ENCODE measurements at regions of chr12 and their contacts with region 1.

Region 1: GRCh38 chr12:8609061-8609570 is 3.5 kb downstream of the AICDA start:
- DNase-seq: peak; percentile 67
- H3K4me3 ChIP-seq: no peak overlapping the region
- H3K27ac ChIP-seq: no peak overlapping the region
- H3K4me1 ChIP-seq: no peaks in the 10 kb centered on the region
- H3K27me3 ChIP-seq: peaks cover 4 to 9% of the 10 kb centered on the region in 2 experiments
- CTCF ChIP-seq: peak; percentile 58 to 75
- POLR2A ChIP-seq: no peak

Region 2: GRCh38 chr12:8596561-8596960 is 12.6 kb before region 1 on chr12:
- CTCF ChIA-PET with region 1: interaction called, 12 read pairs
- POLR2A ChIA-PET with region 1: no interaction called
- dilution Hi-C with region 1: no loop called
- intact Hi-C with region 1: no loop called
- DNase-seq: no peak
- H3K4me3 ChIP-seq: no peak overlapping the region
- H3K27ac ChIP-seq: no peak overlapping the region
- H3K4me1 ChIP-seq: no peaks in the 10 kb centered on the region
- H3K27me3 ChIP-seq: no peaks in the 10 kb centered on the region
- CTCF ChIP-seq: no peak
- POLR2A ChIP-seq: no peak

Region 3: GRCh38 chr12:8622646-8623045 is 13.5 kb after region 1 on chr12:
- CTCF ChIA-PET with region 1: interaction called, 33 read pairs
- POLR2A ChIA-PET with region 1: no interaction called
- dilution Hi-C with region 1: no loop called
- intact Hi-C with region 1: no loop called
- DNase-seq: no peak
- H3K4me3 ChIP-seq: no peak overlapping the region
- H3K27ac ChIP-seq: no peak overlapping the region
- H3K4me1 ChIP-seq: peaks cover 14% of the 10 kb centered on the region
- H3K27me3 ChIP-seq: no peaks in the 10 kb centered on the region
- CTCF ChIP-seq: no peak
- POLR2A ChIP-seq: no peak

Measured in endothelial cell of umbilical vein (primary cell).